ENCODE measurements at regions of chr5 and their contacts with region 1.

Region 1: GRCh38 chr5:135662683-135663082 is 83.9 kb upstream of the CXCL14 start:
- DNase-seq: no peak
- H3K4me3 ChIP-seq: no peak overlapping the region
- H3K4me3 Mint-ChIP-seq: no peak overlapping the region
- H3K27ac Mint-ChIP-seq: no peak overlapping the region
- H3K4me1 ChIP-seq: peaks cover 20% of the 10 kb centered on the region
- H3K4me1 Mint-ChIP-seq: no peaks in the 10 kb centered on the region
- H3K27me3 ChIP-seq: no peaks in the 10 kb centered on the region; the same call in 1 of the 2 replicates
- H3K27me3 Mint-ChIP-seq: peaks cover 10% of the 10 kb centered on the region
- CTCF ChIP-seq: peak in 1 of 2 experiments; percentile 13

Region 2: DNA sequence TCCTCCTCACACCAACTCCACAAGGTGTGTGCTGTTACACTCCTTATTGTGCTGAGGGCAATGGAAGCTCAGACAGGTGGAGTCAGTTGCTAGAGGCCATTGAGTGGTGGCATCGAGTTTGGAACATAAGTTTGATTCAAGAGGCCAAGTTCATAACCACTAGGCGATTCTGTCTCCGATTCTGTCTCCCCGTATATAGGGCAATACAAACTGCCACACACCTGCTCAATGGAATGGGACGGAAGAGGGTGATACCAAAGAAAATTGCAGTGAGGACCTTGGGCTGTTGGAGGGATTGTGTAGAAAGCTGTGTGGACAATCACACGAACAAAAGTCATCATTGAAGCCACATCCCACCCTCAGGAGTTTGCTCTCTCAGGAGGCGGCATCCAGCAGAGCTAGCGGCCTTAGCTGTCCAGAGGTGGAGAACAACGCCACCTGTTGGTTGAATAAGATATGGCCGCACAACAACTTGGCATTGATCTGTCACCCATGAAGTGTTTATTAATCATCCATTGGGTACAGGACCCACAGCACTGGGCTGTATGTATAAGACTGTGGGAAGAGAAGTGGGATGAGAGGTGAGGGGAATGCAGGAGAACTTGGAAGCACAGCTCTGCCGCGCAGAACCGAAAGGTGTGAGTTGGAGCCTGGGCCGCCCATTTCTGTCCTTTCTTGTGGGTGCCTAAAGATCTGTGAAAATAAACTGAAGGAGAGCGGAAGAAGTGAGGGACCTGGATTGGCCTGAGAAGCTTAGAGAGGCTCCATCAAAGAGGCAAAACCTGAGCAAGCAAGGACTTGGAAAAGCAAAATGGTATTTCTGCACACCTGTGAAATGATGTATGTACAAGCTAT is 110.9 kb before region 1 on chr5:
- CTCF ChIA-PET with region 1: no interaction called
- POLR2A ChIA-PET with region 1: no interaction called
- intact Hi-C with region 1: no loop called
- DNase-seq: peak; percentile 78 to 82
- H3K4me3 ChIP-seq: no peak overlapping the region
- H3K4me3 Mint-ChIP-seq: no peak overlapping the region
- H3K27ac Mint-ChIP-seq: no peak overlapping the region
- H3K4me1 ChIP-seq: no peaks in the 10 kb centered on the region
- H3K4me1 Mint-ChIP-seq: peaks cover 6% of the 10 kb centered on the region
- H3K27me3 ChIP-seq: no peaks in the 10 kb centered on the region
- H3K27me3 Mint-ChIP-seq: peaks cover 10% of the 10 kb centered on the region
- CTCF ChIP-seq: peak; percentile 80 to 82

Region 3: GRCh38 chr5:135641734-135642361 is 20.8 kb before region 1 on chr5:
- CTCF ChIA-PET with region 1: no interaction called
- POLR2A ChIA-PET with region 1: no interaction called
- intact Hi-C with region 1: loop called (anchors 1 kb)
- DNase-seq: peak in 1 of 2 experiments; percentile 63
- H3K4me3 ChIP-seq: no peak overlapping the region
- H3K4me3 Mint-ChIP-seq: no peak overlapping the region
- H3K27ac Mint-ChIP-seq: no peak overlapping the region
- H3K4me1 ChIP-seq: peaks cover 25% of the 10 kb centered on the region
- H3K4me1 Mint-ChIP-seq: peaks cover 17% of the 10 kb centered on the region
- H3K27me3 ChIP-seq: no peaks in the 10 kb centered on the region
- H3K27me3 Mint-ChIP-seq: peaks cover 7% of the 10 kb centered on the region
- CTCF ChIP-seq: no peak

Region 4: GRCh38 chr5:135678640-135679268 is 16.1 kb after region 1 on chr5:
- CTCF ChIA-PET with region 1: no interaction called
- POLR2A ChIA-PET with region 1: no interaction called
- intact Hi-C with region 1: no loop called
- DNase-seq: no peak
- H3K4me3 ChIP-seq: no peak overlapping the region
- H3K4me3 Mint-ChIP-seq: no peak overlapping the region
- H3K27ac Mint-ChIP-seq: no peak overlapping the region
- H3K4me1 ChIP-seq: no peaks in the 10 kb centered on the region
- H3K4me1 Mint-ChIP-seq: no peaks in the 10 kb centered on the region
- H3K27me3 ChIP-seq: no peaks in the 10 kb centered on the region
- H3K27me3 Mint-ChIP-seq: peaks cover 11% of the 10 kb centered on the region
- CTCF ChIP-seq: no peak

Region 5: GRCh38 chr5:135761746-135762145 is 99.1 kb after region 1 on chr5:
- CTCF ChIA-PET with region 1: no interaction called
- POLR2A ChIA-PET with region 1: no interaction called
- intact Hi-C with region 1: no loop called
- DNase-seq: no peak
- H3K4me3 ChIP-seq: no peak overlapping the region
- H3K4me3 Mint-ChIP-seq: no peak overlapping the region
- H3K27ac Mint-ChIP-seq: no peak overlapping the region
- H3K4me1 ChIP-seq: no peaks in the 10 kb centered on the region
- H3K4me1 Mint-ChIP-seq: no peaks in the 10 kb centered on the region
- H3K27me3 ChIP-seq: no peaks in the 10 kb centered on the region; the same call in 1 of the 2 replicates
- H3K27me3 Mint-ChIP-seq: peaks cover 3% of the 10 kb centered on the region
- CTCF ChIP-seq: no peak

Measured in Caco-2 (cell line).